ENCODE measurements at regions of chr9 and their contacts with region 1.

Region 1: GRCh38 chr9:132669698-132670456 is at the start of gene DDX31:
- DNase-seq: peak; percentile 92
- ATAC-seq: peak; percentile 98 to 99
- total RNA-seq, gene DDX31: 5.2 to 7.9 TPM

Region 2: GRCh38 chr9:132888151-132888550 is 218.3 kb after region 1 on chr9:
- intact Hi-C with region 1: no loop called
- DNase-seq: no peak
- ATAC-seq: no peak

Region 3: DNA sequence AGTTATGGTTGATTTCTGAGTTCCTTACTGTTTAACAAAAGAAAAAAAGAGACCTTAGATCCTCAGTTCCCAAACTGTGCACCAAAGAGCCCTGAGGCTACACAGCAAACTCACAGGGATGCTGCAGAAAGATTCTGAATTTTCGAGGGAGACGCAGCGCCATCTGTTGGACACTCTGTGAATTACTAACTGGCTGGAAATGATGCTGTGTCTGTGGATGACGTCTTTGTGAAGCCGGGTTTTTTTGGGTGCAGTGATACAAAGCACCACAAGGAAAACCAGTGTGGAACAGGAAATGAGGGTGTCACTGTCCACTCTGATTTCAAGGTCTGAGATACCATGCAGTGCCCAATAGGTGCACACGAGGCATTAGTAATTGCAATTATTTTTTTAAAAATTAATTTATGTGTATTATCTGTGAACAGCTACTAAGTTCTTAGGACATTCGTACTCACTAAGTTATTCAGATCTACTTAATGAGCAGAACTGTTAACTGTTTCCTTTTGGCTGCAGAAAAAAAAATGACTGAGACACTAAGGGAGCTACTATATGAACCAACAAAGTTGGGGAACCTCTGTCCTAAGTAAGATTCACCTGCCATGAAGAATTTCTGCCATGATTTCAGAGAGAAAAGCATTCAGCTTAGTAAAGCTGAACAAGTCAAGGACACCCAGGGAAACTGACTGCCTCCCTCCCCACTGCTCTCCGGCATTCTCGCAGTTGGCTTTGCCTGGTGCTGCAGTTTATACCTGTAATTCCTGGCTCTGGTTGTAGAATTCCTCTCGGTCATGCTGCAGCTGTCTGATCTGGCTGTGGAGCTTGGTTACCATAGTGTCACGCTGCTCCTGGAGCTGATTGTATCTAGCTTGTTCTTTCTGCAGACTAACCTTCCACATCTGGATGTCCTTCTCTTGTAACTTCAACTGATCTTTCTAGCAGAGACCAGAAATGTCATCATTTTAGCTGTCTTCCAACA is 232.3 kb after region 1 on chr9:
- intact Hi-C with region 1: loop called in 1 of 2 experiments (anchors 10 kb)
- DNase-seq: peak; percentile 60
- ATAC-seq: peak; percentile 81 to 85